ENCODE measurements at regions of chr9 and their contacts with region 1.

Region 1: GRCh38 chr9:109880277-109881169 is 100.5 kb downstream of the PALM2AKAP2 start:
- DNase-seq: no peak
- ATAC-seq: no peak
- H3K4me3 ChIP-seq: no peak overlapping the region
- H3K27ac ChIP-seq: no peak overlapping the region
- H3K4me1 ChIP-seq: peaks cover 0 to under 1% of the 10 kb centered on the region in 2 donors
- H3K27me3 ChIP-seq: no peaks in the 10 kb centered on the region
- CTCF ChIP-seq: peak in 4 of 5 experiments; percentile 14 to 53 (median 36)
- POLR2A ChIP-seq: no peak

Region 2: DNA sequence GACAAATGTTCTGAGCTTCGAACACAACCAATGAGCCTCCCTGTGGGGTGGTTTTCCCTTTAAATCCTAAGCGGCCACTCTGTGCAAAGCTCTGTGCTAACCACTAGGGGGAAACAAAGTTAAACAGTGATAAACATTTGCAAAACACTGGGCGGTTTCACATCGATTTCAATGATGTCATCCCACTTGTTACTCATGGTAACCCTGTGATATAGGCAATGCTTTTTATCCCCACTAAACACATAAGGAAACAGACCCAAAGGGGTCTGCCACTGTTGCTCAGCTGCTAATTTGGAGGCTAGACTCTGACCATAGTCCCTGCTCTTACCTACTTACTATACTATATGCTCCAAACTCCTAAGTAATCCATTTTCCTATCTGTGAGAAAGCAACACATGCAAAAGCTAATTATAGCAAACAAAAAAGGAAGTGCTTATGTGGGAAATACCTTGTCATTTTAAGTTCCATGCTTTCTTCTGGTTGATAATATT is 439.7 kb before region 1 on chr9:
- in situ Hi-C with region 1: no loop called
- intact Hi-C with region 1: loop called (anchors 10 kb)
- DNase-seq: no peak
- ATAC-seq: peak; percentile 67 to 68
- H3K4me3 ChIP-seq: no peak overlapping the region
- H3K27ac ChIP-seq: peak overlapping the region; percentile 36 to 61 (median 50)
- H3K4me1 ChIP-seq: peaks cover 23 to 34% of the 10 kb centered on the region in 2 donors
- H3K27me3 ChIP-seq: no peaks in the 10 kb centered on the region
- CTCF ChIP-seq: peak; percentile 74 to 86 (median 82)
- POLR2A ChIP-seq: no peak

Region 3: GRCh38 chr9:109986521-109986991 is 106.0 kb after region 1 on chr9:
- in situ Hi-C with region 1: no loop called
- intact Hi-C with region 1: no loop called
- DNase-seq: no peak
- ATAC-seq: no peak
- H3K4me3 ChIP-seq: no peak overlapping the region
- H3K27ac ChIP-seq: no peak overlapping the region
- H3K4me1 ChIP-seq: no peaks in the 10 kb centered on the region
- H3K27me3 ChIP-seq: no peaks in the 10 kb centered on the region
- CTCF ChIP-seq: no peak
- POLR2A ChIP-seq: no peak